Activated naive CD4-positive, alpha-beta T cell treated with anti-CD3 and anti-CD28 coated beads for 36 hours (primary cell): ENCODE measurements at regions of chr10 and their contacts with region 1.

Region 1: DNA sequence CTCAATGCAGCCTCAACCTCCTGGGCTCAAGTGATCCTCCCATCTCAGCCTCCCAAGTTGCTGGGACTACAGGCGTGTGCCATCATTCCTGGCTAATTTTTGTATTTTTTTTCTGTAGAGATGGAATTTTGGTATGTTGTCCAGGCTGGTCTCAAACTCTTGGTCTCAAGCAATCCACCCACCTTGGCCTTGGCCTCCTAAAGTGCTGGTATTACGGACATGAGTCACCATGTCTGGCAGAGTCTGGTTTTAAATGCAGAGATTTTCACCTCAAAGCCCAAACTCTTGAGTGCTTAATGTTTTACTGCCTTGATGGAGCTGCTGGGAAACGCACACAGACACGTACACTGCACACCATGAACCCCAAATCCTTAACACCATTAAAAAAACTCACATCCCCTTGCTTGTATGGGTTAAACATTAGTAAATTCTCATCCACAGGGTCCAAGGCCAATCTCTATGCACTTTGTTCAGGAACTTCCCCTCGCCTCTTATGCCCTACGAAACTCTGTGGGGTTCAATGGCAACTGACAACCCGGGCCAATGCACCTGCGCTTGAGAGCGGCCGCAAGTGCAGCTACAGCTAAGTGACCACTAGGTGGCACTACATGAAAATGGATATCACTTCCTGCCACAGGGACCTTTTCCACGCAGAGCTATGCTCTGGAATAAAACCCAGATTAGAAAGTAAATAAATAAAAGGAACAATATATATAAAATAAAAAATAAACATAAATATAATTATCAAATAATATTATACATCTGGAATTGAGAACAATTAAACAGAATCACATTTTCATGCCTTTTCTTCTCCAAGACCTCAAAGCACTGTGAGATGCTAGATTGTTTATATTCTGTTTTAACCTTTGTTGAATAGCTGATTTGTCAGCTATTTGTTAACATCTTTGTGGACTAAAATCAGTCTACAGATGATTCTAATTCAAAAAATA is 66.9 kb upstream of the AFAP1L2 start:
- DNase-seq: peak; percentile 79
- H3K4me3 Mint-ChIP-seq: no peak overlapping the region
- H3K27ac Mint-ChIP-seq: peak overlapping the region; percentile 44
- H3K4me1 Mint-ChIP-seq: peaks cover 22% of the 10 kb centered on the region
- H3K27me3 Mint-ChIP-seq: no peaks in the 10 kb centered on the region

Region 2: GRCh38 chr10:114499630-114500190 is 28.5 kb after region 1 on chr10:
- CTCF ChIA-PET with region 1: interaction called, 17 read pairs
- intact Hi-C with region 1: no loop called
- DNase-seq: peak; percentile 95
- H3K4me3 Mint-ChIP-seq: peak overlapping the region; percentile 56
- H3K27ac Mint-ChIP-seq: peak overlapping the region; percentile 96
- H3K4me1 Mint-ChIP-seq: peaks cover 87% of the 10 kb centered on the region
- H3K27me3 Mint-ChIP-seq: no peaks in the 10 kb centered on the region

Region 3: GRCh38 chr10:114520453-114520852 is 49.2 kb after region 1 on chr10:
- CTCF ChIA-PET with region 1: interaction called, 23 read pairs
- intact Hi-C with region 1: no loop called
- DNase-seq: peak; percentile 59
- H3K4me3 Mint-ChIP-seq: peak overlapping the region; percentile 40
- H3K27ac Mint-ChIP-seq: peak overlapping the region; percentile 99
- H3K4me1 Mint-ChIP-seq: peaks cover 89% of the 10 kb centered on the region
- H3K27me3 Mint-ChIP-seq: no peaks in the 10 kb centered on the region

Region 4: DNA sequence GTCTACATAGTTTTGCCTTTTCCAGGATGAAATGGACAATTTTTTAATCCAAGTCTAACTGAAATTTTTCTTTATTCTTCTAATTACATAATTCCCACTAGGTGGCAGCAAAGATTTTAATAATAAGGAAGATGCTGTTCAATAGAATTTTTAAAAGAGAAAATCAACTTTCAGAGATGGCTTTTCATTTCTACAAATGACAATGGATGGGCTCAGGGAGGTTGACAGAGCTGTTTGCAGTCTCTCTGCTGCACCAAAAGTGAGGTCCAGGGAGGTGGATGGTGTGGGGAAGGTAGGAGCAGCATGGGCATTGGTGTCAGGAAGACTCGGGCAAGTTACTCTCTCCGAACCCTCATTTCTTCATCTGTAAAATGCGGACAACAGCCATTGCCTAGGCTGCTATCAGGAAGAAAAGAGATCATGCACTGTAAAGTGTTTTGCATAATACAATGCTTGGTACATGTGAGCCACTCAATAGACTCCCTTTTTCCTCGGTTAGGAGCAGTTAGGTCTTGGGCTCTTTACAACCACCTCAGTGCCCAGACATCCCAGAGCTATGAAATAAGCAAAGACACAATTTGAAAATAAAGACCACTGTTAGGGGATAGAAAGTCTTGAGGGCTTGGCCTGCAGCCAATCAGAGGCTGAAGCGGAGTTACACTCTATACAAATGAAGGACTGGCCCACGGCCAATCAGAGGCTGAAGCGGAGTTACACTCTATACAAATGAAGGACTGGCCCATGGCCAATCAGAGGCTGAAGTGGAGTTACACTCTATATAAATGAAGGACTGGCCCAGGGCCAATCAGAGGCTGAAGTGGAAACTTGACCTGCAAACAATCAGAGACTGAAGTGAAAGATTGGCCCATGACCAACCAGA is 79.8 kb after region 1 on chr10:
- CTCF ChIA-PET with region 1: interaction called, 253 read pairs
- intact Hi-C with region 1: loop called (anchors 1 kb)
- DNase-seq: no peak
- H3K4me3 Mint-ChIP-seq: no peak overlapping the region
- H3K27ac Mint-ChIP-seq: no peak overlapping the region
- H3K4me1 Mint-ChIP-seq: peaks cover 18% of the 10 kb centered on the region
- H3K27me3 Mint-ChIP-seq: no peaks in the 10 kb centered on the region

Region 5: DNA sequence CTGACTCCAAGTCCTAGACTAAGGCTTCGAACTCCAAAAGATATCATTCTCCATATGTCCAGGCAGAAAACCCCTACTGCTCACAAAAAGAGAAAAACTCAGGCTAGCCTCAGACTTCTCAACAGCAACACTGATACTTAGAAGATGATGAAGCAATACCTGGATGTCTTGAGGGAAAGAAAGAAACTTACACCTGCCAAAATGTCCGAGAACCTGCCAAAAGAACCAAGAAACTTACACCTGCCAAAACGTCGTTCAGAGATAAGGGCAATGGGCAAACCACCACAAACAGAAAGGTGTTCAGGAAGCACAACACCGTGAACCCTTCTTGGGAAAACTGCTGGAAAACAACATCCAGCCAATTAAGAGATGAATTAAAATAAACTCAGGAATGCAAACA is 171.5 kb after region 1 on chr10:
- CTCF ChIA-PET with region 1: no interaction called
- intact Hi-C with region 1: no loop called
- DNase-seq: no peak
- H3K4me3 Mint-ChIP-seq: no peak overlapping the region
- H3K27ac Mint-ChIP-seq: no peak overlapping the region
- H3K4me1 Mint-ChIP-seq: no peaks in the 10 kb centered on the region
- H3K27me3 Mint-ChIP-seq: no peaks in the 10 kb centered on the region

Region 6: DNA sequence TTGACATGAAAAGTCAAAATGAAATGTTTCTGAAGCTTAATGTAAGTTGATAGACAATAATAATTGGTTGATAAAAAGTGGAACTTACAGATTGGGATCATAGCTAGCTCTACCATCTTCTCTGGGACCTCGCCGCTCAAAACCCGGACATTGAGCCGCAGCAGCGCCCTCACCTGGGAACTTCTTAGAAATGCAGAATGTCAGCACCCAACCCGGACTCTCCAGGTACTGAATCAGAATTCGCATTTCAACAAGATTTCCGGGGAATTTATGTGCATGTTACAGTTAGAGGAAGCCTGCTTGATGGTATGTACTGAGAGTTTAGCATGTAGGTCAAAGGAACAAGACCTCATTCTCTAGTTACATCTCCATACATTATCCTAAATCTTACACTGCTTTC is 223.5 kb after region 1 on chr10:
- CTCF ChIA-PET with region 1: interaction called, 13 read pairs
- intact Hi-C with region 1: loop called (anchors 1 kb)
- DNase-seq: peak; percentile 61
- H3K4me3 Mint-ChIP-seq: no peak overlapping the region
- H3K27ac Mint-ChIP-seq: no peak overlapping the region
- H3K4me1 Mint-ChIP-seq: peaks cover 4% of the 10 kb centered on the region
- H3K27me3 Mint-ChIP-seq: peaks cover 2% of the 10 kb centered on the region